Posterior vena cava (tissue), 2 donors: ENCODE measurements at regions of chr2 and their contacts with region 1.

Region 1: GRCh38 chr2:108593547-108594098 is 59.4 kb downstream of the LIMS1 start:
- DNase-seq: no peak

Region 2: GRCh38 chr2:108633409-108633808 is 39.8 kb after region 1 on chr2:
- intact Hi-C with region 1: loop called in 1 of 2 experiments (anchors 2 kb)
- DNase-seq: no peak

Region 3: GRCh38 chr2:108833219-108833618 is 239.6 kb after region 1 on chr2:
- intact Hi-C with region 1: no loop called
- DNase-seq: no peak